Activated CD4-positive, alpha-beta T cell treated with anti-CD3 and anti-CD28 coated beads, Interleukin-2, amount 10 ng/mL, durations not matched to agents 7 days and 5 days (primary cell): ENCODE measurements at regions of chr19 and their contacts with region 1.

Region 1: GRCh38 chr19:19444681-19445155 is 39.2 kb downstream of the GATAD2A start:
- DNase-seq: peak; percentile 25
- H3K4me3 Mint-ChIP-seq: no peak overlapping the region
- H3K27ac Mint-ChIP-seq: peak overlapping the region; percentile 86
- H3K4me1 Mint-ChIP-seq: peaks cover 70% of the 10 kb centered on the region
- H3K27me3 Mint-ChIP-seq: no peaks in the 10 kb centered on the region

Region 2: DNA sequence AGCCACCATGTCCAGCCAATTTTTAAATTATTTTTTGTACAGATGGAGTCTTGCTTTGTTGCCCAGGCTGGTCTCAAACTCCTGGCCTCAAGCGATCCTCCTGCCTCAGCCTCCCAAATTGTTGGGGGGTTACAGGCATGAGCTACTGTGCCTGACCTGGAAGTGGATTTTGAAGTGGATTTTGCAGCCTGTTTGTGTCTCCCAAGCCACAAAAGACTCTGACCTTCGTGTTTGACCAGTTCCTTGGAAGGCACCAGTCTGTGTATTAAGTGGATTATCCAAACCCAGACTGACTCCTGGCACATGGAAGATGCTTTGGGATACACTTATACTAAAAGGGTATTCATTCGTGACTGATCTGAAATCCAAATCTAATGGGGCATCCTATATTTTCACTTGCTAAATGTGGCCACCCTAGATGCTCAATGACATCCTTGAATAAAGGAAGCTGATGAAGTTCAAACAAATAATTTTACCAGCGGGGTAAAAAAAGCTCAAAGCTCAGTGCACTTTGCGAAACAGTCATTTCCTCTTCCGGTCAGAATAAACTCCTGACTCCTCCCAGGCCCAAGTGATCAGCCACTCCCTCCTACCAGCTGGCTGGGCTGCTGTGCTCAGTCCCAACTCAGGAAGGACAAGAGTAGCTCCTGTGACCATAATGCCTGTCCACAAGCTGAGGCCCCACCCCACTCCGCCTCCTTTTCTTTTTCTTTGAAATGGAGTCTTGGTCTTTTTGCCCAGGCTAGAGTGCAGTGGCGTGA is 71.9 kb before region 1 on chr19:
- CTCF ChIA-PET with region 1: no interaction called
- POLR2A ChIA-PET with region 1: no interaction called
- DNase-seq: peak; percentile 55
- H3K4me3 Mint-ChIP-seq: no peak overlapping the region
- H3K27ac Mint-ChIP-seq: peak overlapping the region; percentile 94
- H3K4me1 Mint-ChIP-seq: peaks cover 14% of the 10 kb centered on the region
- H3K27me3 Mint-ChIP-seq: no peaks in the 10 kb centered on the region

Region 3: GRCh38 chr19:19459707-19460251 is 15.1 kb after region 1 on chr19:
- CTCF ChIA-PET with region 1: interaction called, 11 read pairs
- POLR2A ChIA-PET with region 1: interaction called, 3 read pairs
- DNase-seq: peak; percentile 76
- H3K4me3 Mint-ChIP-seq: peak overlapping the region; percentile 70
- H3K27ac Mint-ChIP-seq: peak overlapping the region; percentile 99
- H3K4me1 Mint-ChIP-seq: peaks cover 79% of the 10 kb centered on the region
- H3K27me3 Mint-ChIP-seq: no peaks in the 10 kb centered on the region